Dorsolateral prefrontal cortex (tissue), 120 donors: ENCODE measurements at regions of chr9 and their contacts with region 1.

Region 1: DNA sequence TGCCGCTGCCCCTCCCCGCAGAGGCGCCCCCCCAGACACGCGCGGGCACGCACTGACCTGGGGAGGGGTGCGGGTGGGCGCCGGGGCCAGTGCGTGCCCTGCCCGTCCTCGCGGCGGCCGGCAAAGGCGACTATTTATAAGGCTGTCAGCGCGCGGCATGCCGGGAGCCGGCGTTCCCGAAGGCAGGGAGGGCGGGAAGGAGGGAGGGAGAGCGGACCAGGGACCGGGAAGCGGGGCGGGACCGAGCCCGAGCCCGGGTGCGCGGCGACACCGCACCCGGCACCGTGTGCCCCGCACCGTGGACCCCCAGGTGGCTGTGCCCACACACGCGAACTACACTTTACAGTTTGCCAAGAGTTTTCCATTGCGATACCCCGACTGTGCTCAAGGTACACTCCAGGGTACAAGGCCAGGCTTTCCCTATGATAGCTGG is at the start of gene AK1:
- DNase-seq: peak; percentile 85 to 94 (median 90)
- H3K4me3 ChIP-seq: peak within 1 kb of the TSS; percentile 57 to 85 (median 73)
- H3K27ac ChIP-seq: peak within 1 kb of the TSS; percentile 49 to 93 (median 88)
- H3K27me3 ChIP-seq: no peaks in the 10 kb centered on the region
- CTCF ChIP-seq: peak in 15 of 56 donors; percentile 13 to 51 (median 22)
- total RNA-seq, gene AK1: 58.9 to 165 (median 129) TPM

Region 2: DNA sequence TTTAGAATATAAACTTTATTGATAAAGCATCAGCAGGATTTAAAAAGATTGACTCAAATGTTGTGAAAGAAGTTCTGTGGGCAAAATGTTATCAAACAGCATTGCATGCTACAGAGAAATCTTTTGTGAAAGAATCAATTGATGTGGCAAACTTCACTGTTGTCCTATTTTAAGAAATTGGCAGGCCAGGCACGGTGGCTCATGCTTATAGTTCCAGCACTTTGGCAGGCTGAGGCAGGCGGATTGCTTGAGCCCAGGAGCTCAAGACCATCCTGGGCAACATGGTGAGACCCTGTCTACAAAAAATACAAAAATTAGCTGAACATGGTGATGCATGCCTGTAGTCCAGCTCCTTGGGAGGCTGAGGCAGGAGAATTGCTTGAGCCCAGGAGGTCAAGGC is 1055.3 kb before region 1 on chr9:
- intact Hi-C with region 1: no loop called
- DNase-seq: peak in 5 of 10 donors; percentile 45 to 76 (median 69)
- H3K4me3 ChIP-seq: peak overlapping the region in 15 of 59 donors; percentile 0 to 46 (median 24)
- H3K27ac ChIP-seq: peak overlapping the region; percentile 13 to 92 (median 82)
- H3K27me3 ChIP-seq: no peaks in the 10 kb centered on the region
- CTCF ChIP-seq: no peak

Region 3: GRCh38 chr9:127785023-127785932 is 92.3 kb before region 1 on chr9:
- intact Hi-C with region 1: loop called in 1 of 2 experiments (anchors 2 kb)
- DNase-seq: peak; percentile 76 to 90 (median 80)
- H3K4me3 ChIP-seq: peak overlapping the region; percentile 37 to 100 (median 96)
- H3K27ac ChIP-seq: peak overlapping the region; percentile 52 to 98 (median 93)
- H3K27me3 ChIP-seq: no peaks in the 10 kb centered on the region
- CTCF ChIP-seq: peak; percentile 50 to 97 (median 88)

Region 4: DNA sequence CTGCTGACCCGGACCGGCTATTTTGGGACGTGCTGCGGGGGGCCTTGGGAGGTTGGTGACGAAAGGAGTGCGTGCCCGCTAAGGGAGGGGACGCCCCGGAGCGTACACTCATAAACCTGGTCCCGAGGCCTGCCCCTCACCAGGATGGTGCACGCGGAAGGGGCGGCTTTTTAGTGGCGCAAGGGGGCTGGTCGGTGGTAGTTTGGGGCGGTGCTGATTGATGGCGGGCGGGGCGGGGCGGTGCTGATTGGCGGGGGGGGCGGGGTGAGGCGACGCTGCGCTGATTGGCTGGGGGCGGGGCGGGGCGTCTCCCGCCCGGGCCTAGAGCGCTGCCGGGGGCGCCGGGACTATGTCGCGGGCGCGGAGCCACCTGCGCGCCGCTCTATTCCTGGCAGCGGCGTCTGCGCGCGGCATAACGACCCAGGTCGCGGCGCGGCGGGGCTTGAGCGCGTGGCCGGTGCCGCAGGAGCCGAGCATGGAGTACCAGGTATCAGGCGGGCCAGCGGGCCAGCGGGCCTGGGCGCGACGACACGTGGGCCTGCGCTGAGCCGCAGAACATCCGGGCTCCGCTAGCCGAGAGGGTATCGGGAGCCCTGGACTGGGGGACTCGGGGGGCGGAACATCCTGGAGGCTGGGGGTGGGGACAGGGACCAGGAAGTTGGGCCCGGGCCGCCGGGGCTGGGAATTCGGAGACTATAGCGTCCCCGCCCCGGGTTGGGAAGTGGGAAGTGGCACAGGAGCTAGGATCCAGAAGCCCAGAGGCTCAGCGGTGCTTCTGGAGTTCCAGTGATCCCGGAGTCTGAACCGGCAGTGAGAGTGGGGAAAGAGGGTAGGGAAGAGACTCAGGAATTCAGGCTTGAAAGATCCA is 74.8 kb before region 1 on chr9 and contains the start of gene FPGS:
- intact Hi-C with region 1: loop called (anchors 2 to 5 kb)
- DNase-seq: peak; percentile 62 to 90 (median 80)
- H3K4me3 ChIP-seq: peak within 1 kb of the TSS; percentile 53 to 93 (median 83)
- H3K27ac ChIP-seq: peak within 1 kb of the TSS; percentile 32 to 94 (median 88)
- H3K27me3 ChIP-seq: no peaks in the 10 kb centered on the region
- CTCF ChIP-seq: peak in 19 of 56 donors; percentile 3 to 39 (median 16)
- total RNA-seq, gene FPGS: 19.5 to 55.8 (median 36.6) TPM

Region 5: DNA sequence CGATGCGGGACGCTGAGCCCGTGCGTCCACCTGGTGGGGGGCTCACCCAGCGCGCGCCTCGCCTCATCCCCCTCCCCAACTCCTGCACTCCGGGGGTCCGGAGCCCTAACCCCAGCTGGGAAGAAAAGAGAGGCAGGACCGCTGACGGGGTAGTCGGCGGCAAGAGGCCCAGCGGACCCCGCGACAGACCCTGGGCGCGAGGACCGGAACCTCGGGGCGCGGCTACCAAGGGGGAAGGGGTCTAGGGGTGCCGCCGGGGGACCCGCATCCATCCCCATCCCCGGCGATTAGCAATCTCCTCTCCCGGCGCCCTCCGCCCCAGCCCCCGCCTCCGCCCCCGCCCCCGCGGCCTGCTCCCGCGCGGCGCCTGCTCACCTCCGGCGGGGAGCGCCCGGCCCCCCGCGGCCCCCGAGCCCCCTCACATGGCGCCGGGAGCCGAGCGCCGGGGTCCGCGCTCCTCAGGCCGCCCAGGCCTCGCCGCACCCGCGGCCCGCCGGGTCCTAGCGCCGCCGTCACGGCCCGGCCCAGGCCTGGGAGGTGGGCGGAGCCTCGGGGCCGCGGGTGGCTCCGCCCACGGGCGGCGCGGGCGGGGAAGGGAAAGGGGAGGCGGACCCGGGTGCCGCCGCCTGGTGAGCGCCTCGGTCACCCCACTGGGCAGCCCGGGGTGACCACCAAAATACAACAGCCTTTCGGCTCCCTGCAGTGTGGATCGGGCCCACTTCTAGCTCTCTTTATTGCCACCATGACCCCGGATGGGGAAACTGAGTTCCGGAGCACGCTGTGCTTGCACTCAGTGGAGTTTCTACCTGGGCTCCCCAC is 21.8 kb after region 1 on chr9 and contains the start of gene ST6GALNAC6:
- intact Hi-C with region 1: loop called in 1 of 2 experiments (anchors 2 kb)
- DNase-seq: peak in 7 of 10 donors; percentile 39 to 87 (median 71)
- H3K4me3 ChIP-seq: peak within 1 kb of the TSS; percentile 70 to 98 (median 92)
- H3K27ac ChIP-seq: peak within 1 kb of the TSS in 58 of 59 donors; percentile 8 to 95 (median 90)
- H3K27me3 ChIP-seq: no peaks in the 10 kb centered on the region
- CTCF ChIP-seq: peak in 25 of 56 donors; percentile 6 to 49 (median 23)
- total RNA-seq, gene ST6GALNAC6: 52.7 to 225 (median 137) TPM